Right ventricle myocardium inferior (tissue), 1 donor: ENCODE measurements at regions of chr20 and their contacts with region 1.

Region 1: DNA sequence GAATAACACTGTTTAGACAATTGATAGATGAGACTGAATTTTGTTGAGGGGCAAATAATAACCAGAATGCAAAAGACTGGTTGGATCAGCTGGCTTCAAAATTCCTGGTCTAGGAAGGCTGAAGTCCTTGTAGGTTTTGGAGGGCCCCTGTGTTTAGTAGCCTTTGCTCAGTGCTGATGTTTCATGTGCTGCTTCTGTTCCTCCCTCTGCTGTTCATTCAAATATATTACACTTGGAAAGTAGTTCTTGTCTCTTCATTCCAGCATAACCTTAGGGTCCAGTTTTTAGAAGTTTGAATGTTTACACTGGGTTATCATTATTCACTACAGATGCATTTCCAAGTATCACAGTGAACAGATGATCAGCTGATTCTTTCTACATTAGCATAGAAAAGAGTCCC is 72.5 kb downstream of the FLRT3 start:
- DNase-seq: no peak
- ATAC-seq: no peak

Region 2: GRCh38 chr20:14142171-14142570 is 122.7 kb before region 1 on chr20:
- intact Hi-C with region 1: loop called (anchors 5 kb)
- DNase-seq: no peak
- ATAC-seq: peak; percentile 76